A673 (cell line): ENCODE measurements at regions of chr15 and their contacts with region 1.

Region 1: GRCh38 chr15:65516997-65517865 is at the start of gene DPP8:
- DNase-seq: peak; percentile 96
- H3K4me3 ChIP-seq: peak within 1 kb of the TSS; percentile 94
- H3K27ac ChIP-seq: peak within 1 kb of the TSS; percentile 92
- H3K4me1 ChIP-seq: peaks cover 24% of the 10 kb centered on the region
- H3K27me3 ChIP-seq: no peaks in the 10 kb centered on the region
- CTCF ChIP-seq: peak; percentile 99
- total RNA-seq, gene DPP8: 29.6 and 35.9 TPM in 2 replicates

Region 2: GRCh38 chr15:64865998-64866520 is 651.2 kb before region 1 on chr15:
- CTCF ChIA-PET with region 1: no interaction called
- POLR2A ChIA-PET with region 1: interaction called, 14 read pairs
- intact Hi-C with region 1: no loop called
- DNase-seq: peak; percentile 31
- H3K4me3 ChIP-seq: no peak overlapping the region
- H3K27ac ChIP-seq: no peak overlapping the region
- H3K4me1 ChIP-seq: no peaks in the 10 kb centered on the region
- H3K27me3 ChIP-seq: no peaks in the 10 kb centered on the region
- CTCF ChIP-seq: no peak

Region 3: GRCh38 chr15:66023311-66023972 is 506.2 kb after region 1 on chr15:
- CTCF ChIA-PET with region 1: interaction called, 12 read pairs
- POLR2A ChIA-PET with region 1: no interaction called
- intact Hi-C with region 1: no loop called
- DNase-seq: no peak
- H3K4me3 ChIP-seq: no peak overlapping the region
- H3K27ac ChIP-seq: no peak overlapping the region
- H3K4me1 ChIP-seq: peaks cover 11% of the 10 kb centered on the region
- H3K27me3 ChIP-seq: no peaks in the 10 kb centered on the region
- CTCF ChIP-seq: no peak